K562 (cell line): ENCODE measurements at regions of chr3 and their contacts with region 1.

Region 1: GRCh38 chr3:82133070-82133606 is 371.7 kb upstream of the GBE1 start:
- DNase-seq: peak; percentile 29 to 44 (median 36)
- ATAC-seq: peak; percentile 74
- H3K4me3 ChIP-seq: no peak overlapping the region
- H3K27ac ChIP-seq: no peak overlapping the region
- H3K4me1 ChIP-seq: no peaks in the 10 kb centered on the region
- H3K27me3 ChIP-seq: no peaks in the 10 kb centered on the region
- CTCF ChIP-seq: peak; percentile 31 to 57 (median 55); a peak in 4 of 6 replicates
- EP300 ChIP-seq: no peak
- POLR2A ChIP-seq: no peak
- RAD21 ChIP-seq: peak; percentile 37 to 54; a peak in 3 of 4 replicates

Region 2: DNA sequence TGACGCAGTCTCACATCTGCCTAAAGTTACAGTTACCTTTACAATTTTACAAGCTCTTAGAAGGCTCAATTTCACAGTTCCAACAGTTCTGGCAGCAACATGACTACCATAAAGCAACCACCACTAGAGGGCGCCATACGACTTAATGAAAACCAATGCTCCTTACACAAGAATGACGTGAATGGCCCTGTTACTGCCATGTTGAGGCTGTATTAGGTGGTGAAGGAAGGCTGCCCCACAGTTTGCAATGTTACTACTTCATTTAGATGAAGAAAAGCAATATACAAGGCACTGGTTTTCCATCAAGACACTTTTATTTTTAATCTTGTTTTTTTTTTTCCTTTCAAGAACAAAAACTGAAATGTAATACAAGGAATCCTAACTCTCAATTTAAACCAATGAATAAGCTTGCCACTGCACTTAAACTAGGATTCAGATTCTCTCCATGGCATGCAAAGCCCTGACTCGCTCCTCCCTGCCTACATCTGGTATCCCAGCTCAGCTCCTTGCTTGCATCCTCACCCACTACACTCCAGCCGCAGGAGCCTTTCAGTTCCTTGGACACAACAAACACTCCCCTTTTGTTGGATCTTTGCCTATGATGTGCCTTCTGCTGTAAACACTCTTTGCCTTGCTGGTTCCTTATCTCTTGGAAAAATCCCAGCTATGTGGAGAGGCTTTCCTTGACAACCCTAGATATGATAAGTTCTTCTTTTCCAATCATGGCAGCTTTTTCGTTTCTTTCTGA is 642.4 kb before region 1 on chr3:
- CTCF ChIA-PET with region 1: interaction called, 5 read pairs
- POLR2A ChIA-PET with region 1: no interaction called
- in situ Hi-C with region 1: loop called (anchors 25 kb)
- intact Hi-C with region 1: no loop called
- DNase-seq: peak; percentile 46 to 83 (median 48)
- ATAC-seq: peak; percentile 91
- H3K4me3 ChIP-seq: no peak overlapping the region
- H3K27ac ChIP-seq: no peak overlapping the region
- H3K4me1 ChIP-seq: no peaks in the 10 kb centered on the region
- H3K27me3 ChIP-seq: no peaks in the 10 kb centered on the region
- CTCF ChIP-seq: peak; percentile 53 to 67 (median 65)
- EP300 ChIP-seq: no peak
- POLR2A ChIP-seq: no peak
- RAD21 ChIP-seq: peak; percentile 52 to 68

Region 3: DNA sequence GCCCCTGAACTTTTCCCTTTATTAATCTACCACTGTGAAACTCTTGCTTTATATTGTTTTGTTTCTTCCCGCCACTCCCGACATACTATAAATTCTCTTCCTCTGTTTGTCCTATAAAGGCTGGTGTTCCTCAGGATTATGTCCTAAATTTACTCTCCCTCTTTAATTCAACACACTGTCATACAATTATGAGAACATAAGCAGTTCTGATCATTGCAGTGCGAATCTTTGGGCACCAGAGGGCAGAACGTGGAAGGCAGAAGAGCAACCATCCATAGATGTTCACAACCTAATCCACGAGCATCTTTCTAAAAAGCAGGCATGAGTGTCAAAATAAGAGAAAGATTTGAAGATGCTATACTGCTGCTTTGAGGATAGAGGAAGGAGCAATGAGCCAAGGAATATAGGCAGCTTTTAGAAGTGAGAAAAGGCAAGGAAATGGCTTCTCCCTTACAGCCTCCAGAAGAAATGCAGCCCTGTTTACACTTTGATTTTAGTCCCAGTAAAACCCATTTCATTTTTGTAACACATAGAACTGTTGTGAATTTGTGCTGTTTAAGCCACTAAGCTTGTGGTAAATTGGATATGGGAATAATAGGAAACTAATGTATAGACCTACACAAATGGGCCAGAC is 551.1 kb before region 1 on chr3:
- CTCF ChIA-PET with region 1: no interaction called
- POLR2A ChIA-PET with region 1: no interaction called
- in situ Hi-C with region 1: no loop called
- intact Hi-C with region 1: loop called (anchors 10 kb)
- DNase-seq: peak in 3 of 4 experiments; percentile 2 to 34 (median 4)
- ATAC-seq: peak; percentile 75
- H3K4me3 ChIP-seq: no peak overlapping the region
- H3K27ac ChIP-seq: no peak overlapping the region
- H3K4me1 ChIP-seq: no peaks in the 10 kb centered on the region
- H3K27me3 ChIP-seq: no peaks in the 10 kb centered on the region
- CTCF ChIP-seq: peak; percentile 41 to 53 (median 47); a peak in 5 of 6 replicates
- EP300 ChIP-seq: no peak
- POLR2A ChIP-seq: no peak
- RAD21 ChIP-seq: peak; percentile 38 to 63

Region 4: DNA sequence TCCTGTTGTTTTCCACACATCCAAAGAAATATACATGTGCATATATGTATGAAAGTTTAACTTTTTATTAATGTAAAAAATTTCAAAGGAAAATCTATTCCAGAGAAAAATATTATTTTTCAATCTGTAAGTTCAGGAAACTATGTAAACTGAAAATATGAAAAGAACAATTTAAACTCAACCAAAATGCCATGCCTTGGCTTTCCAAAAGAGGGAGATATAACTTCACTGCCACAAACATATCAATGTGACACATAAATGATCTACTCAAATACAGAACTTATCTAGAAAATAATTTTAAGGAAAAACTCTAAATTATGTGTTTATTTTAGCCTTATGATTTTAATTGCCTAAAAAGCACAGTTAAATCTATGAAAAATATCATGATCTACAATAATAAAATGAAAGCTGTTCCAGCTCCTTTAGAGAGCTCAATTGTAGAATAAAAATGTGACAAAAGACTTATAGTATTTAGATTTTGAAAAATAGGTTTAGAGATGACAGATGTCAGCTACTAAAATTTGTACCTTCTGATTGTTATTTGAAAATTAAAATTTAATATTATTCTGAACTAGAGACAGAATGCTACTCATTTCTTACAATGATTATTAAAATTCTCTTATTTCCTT is 466.5 kb before region 1 on chr3:
- CTCF ChIA-PET with region 1: no interaction called
- POLR2A ChIA-PET with region 1: no interaction called
- in situ Hi-C with region 1: no loop called
- intact Hi-C with region 1: loop called (anchors 5 kb)
- DNase-seq: peak in 1 of 4 experiments; percentile 3
- ATAC-seq: no peak
- H3K4me3 ChIP-seq: no peak overlapping the region
- H3K27ac ChIP-seq: no peak overlapping the region
- H3K4me1 ChIP-seq: 0 out of 5 replicates have a peak, but pooled peaks cover 0 to 3% of the 10 kb centered on the region in 2 experiments
- H3K27me3 ChIP-seq: no peaks in the 10 kb centered on the region
- CTCF ChIP-seq: peak in 2 of 3 experiments; percentile 24 to 63; a peak in 3 of 6 replicates
- EP300 ChIP-seq: no peak
- POLR2A ChIP-seq: no peak
- RAD21 ChIP-seq: peak; percentile 55 to 77